IMR-90 (cell line): ENCODE measurements at regions of chr16 and their contacts with region 1.

Region 1: GRCh38 chr16:13919683-13920509 is at the start of gene ERCC4:
- DNase-seq: peak; percentile 98
- ATAC-seq: peak; percentile 98
- H3K4me3 ChIP-seq: peak within 1 kb of the TSS; percentile 80
- H3K27ac ChIP-seq: peak within 1 kb of the TSS; percentile 86
- H3K4me1 ChIP-seq: peaks cover 7% of the 10 kb centered on the region
- H3K27me3 ChIP-seq: peaks cover 6% of the 10 kb centered on the region
- CTCF ChIP-seq: peak; percentile 93
- POLR2A ChIP-seq: peak; percentile 68; the same call in 1 of the 2 replicates
- RAD21 ChIP-seq: peak; percentile 43
- total RNA-seq, gene ERCC4: 10.0 and 19.2 TPM in 2 replicates

Region 2: DNA sequence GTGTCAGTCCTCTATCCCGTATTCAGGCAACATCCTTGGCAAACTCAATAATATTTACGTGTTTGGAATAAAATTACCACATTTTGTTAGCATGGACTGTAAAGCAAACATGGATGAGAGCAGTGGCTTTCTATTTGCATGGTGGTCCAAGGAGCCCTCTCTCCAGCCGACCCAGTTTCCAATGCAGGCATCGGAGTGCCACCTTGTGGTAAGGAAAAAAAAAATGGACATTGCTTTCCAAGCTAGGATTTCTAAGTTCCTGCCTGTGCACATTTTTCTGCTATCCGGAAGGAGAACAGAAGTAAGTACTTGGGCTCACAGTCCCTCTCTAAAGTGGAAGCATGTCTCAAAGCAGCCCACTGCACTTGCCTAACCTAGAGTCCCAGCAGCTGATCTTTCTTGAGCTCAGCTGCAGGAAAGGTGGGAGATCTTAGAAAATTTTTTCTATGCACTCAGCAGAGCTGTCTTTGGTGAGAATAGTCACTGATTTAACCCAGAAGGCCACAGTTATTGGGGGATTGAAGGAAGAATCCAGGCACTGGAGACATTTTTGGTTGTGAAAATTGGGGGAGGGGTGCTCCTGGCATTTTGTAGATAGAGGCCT is 46.0 kb before region 1 on chr16:
- CTCF ChIA-PET with region 1: interaction called, 12 read pairs
- POLR2A ChIA-PET with region 1: no interaction called
- dilution Hi-C with region 1: no loop called
- in situ Hi-C with region 1: no loop called
- intact Hi-C with region 1: no loop called
- DNase-seq: peak; percentile 2
- ATAC-seq: peak; percentile 37; the same call in 1 of the 2 replicates
- H3K4me3 ChIP-seq: no peak overlapping the region
- H3K27ac ChIP-seq: no peak overlapping the region
- H3K4me1 ChIP-seq: no peaks in the 10 kb centered on the region
- H3K27me3 ChIP-seq: no peaks in the 10 kb centered on the region
- CTCF ChIP-seq: peak; percentile 37
- POLR2A ChIP-seq: no peak
- RAD21 ChIP-seq: peak; percentile 33

Region 3: DNA sequence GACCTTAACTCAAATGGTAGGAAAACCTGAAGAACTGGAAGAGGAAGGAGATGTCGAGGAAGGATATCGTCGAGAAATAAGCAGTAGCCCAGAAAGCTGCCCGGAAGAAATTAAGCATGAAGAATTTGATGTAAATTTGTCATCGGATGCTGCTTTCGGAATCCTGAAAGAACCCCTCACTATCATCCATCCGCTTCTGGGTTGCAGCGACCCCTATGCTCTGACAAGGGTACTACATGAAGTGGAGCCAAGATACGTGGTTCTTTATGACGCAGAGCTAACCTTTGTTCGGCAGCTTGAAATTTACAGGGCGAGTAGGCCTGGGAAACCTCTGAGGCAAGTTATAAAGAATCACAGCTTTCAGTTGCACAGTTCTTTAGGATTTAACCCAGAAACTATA is 15.5 kb after region 1 on chr16:
- CTCF ChIA-PET with region 1: interaction called, 11 read pairs
- POLR2A ChIA-PET with region 1: interaction called, 5 read pairs
- dilution Hi-C with region 1: no loop called
- in situ Hi-C with region 1: no loop called
- intact Hi-C with region 1: no loop called
- DNase-seq: no peak
- ATAC-seq: no peak
- H3K4me3 ChIP-seq: no peak overlapping the region
- H3K27ac ChIP-seq: no peak overlapping the region
- H3K4me1 ChIP-seq: peaks cover 2% of the 10 kb centered on the region
- H3K27me3 ChIP-seq: no peaks in the 10 kb centered on the region
- CTCF ChIP-seq: peak; percentile 16; the same call in 1 of the 2 replicates
- POLR2A ChIP-seq: no peak
- RAD21 ChIP-seq: no peak

Region 4: DNA sequence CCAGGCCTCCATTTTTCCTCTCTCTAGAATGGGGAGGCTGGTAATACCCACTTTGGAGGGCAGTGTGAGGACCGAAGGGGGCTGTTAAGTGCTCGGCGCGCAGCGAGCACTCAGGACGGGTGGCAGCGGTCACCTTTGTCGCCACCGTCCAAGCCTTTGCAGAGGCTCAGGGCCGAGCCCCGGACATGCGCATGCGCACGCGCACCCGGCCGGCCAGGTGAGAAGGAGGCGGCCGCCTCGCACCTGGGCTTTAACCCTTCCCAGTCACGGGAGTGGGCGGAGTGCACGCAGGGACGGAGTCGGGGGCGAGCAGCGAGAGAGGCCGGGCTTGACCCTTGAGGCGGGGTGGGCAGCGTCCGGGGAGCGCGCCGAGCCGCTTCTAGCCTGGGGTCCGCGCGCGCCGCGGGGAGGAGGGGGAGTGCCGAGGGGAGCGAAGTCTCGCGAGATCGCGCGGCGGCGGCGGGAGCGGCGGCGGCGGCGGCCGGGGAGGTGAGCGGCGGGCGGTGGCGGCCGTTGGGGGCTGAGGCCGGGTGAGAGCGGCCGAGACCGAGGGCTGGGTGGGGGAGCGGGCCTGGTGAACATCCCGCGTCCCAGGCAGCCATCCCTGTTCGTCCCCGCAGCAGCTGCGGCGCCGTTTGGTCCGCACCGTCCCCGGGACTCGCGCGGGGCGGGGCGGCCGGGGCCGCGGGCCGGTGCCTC is 151.1 kb after region 1 on chr16 and contains the start of gene MRTFB:
- CTCF ChIA-PET with region 1: no interaction called
- POLR2A ChIA-PET with region 1: no interaction called
- dilution Hi-C with region 1: no loop called
- in situ Hi-C with region 1: no loop called
- intact Hi-C with region 1: loop called (anchors 5 kb)
- DNase-seq: peak; percentile 27
- ATAC-seq: peak; percentile 97
- H3K4me3 ChIP-seq: peak within 1 kb of the TSS; percentile 84
- H3K27ac ChIP-seq: peak within 1 kb of the TSS; percentile 68
- H3K4me1 ChIP-seq: no peaks in the 10 kb centered on the region
- H3K27me3 ChIP-seq: no peaks in the 10 kb centered on the region; the same call in 1 of the 2 replicates
- CTCF ChIP-seq: no peak
- POLR2A ChIP-seq: no peak
- RAD21 ChIP-seq: no peak; the same call in 1 of the 2 replicates
- total RNA-seq, gene MRTFB: 5.4 and 6.9 TPM in 2 replicates

Region 5: GRCh38 chr16:14202697-14203096 is 282.8 kb after region 1 on chr16:
- CTCF ChIA-PET with region 1: interaction called, 3 read pairs
- POLR2A ChIA-PET with region 1: interaction called, 11 read pairs
- dilution Hi-C with region 1: no loop called
- in situ Hi-C with region 1: no loop called
- intact Hi-C with region 1: no loop called
- DNase-seq: no peak
- ATAC-seq: no peak; the same call in 1 of the 2 replicates
- H3K4me3 ChIP-seq: no peak overlapping the region
- H3K27ac ChIP-seq: no peak overlapping the region
- H3K4me1 ChIP-seq: no peaks in the 10 kb centered on the region; the same call in 1 of the 2 replicates
- H3K27me3 ChIP-seq: no peaks in the 10 kb centered on the region
- CTCF ChIP-seq: no peak
- POLR2A ChIP-seq: no peak
- RAD21 ChIP-seq: no peak

Region 6: DNA sequence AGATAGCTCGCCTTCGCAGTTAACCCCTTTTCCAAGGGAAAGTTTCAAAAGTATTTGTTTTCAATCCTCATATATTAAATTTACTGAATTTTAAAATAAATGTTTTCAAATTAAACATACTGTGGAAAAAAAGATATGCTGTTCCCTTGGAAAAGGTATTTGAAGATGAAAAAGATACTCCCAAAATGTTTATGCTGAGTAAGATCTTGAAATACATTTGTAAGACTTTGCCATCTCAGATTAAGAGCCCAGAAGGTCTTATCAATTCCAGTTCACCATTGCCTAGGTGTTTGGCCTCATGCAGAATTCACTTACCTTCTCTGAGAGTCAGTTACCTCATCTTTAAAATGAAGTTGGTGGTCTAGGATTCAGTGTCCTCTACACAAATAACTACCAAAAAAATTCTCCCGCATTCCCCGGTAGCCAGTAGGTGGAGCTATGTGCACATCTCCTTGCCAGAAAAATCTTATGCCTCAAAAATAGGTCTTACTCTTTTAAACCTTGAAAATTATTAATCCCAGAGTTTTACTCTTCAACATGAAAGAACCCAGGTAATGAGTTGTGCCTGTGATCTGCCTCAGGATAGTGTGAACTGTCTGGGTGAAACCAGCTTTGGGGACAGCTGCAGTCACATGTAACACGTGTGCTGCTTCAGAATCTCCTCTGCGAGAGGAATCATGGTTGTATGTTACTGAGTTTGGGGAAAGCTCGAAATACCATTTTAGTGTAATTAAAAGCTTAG is 329.6 kb after region 1 on chr16:
- CTCF ChIA-PET with region 1: interaction called, 7 read pairs
- POLR2A ChIA-PET with region 1: no interaction called
- dilution Hi-C with region 1: no loop called
- in situ Hi-C with region 1: loop called (anchors 10 kb)
- intact Hi-C with region 1: no loop called
- DNase-seq: peak; percentile 43
- ATAC-seq: peak; percentile 70
- H3K4me3 ChIP-seq: no peak overlapping the region
- H3K27ac ChIP-seq: no peak overlapping the region
- H3K4me1 ChIP-seq: no peaks in the 10 kb centered on the region
- H3K27me3 ChIP-seq: no peaks in the 10 kb centered on the region
- CTCF ChIP-seq: peak; percentile 94
- POLR2A ChIP-seq: no peak
- RAD21 ChIP-seq: peak; percentile 89

Region 7: GRCh38 chr16:14529010-14529669 is 609.2 kb after region 1 on chr16:
- CTCF ChIA-PET with region 1: no interaction called
- POLR2A ChIA-PET with region 1: no interaction called
- dilution Hi-C with region 1: no loop called
- in situ Hi-C with region 1: loop called (anchors 5 kb)
- intact Hi-C with region 1: loop called (anchors 2 kb)
- DNase-seq: peak; percentile 93
- ATAC-seq: peak; percentile 90
- H3K4me3 ChIP-seq: peak overlapping the region; percentile 26; the same call in 1 of the 2 replicates
- H3K27ac ChIP-seq: peak overlapping the region; percentile 84
- H3K4me1 ChIP-seq: peaks cover 8% of the 10 kb centered on the region
- H3K27me3 ChIP-seq: no peaks in the 10 kb centered on the region
- CTCF ChIP-seq: peak; percentile 95
- POLR2A ChIP-seq: peak; percentile 51; the same call in 1 of the 2 replicates
- RAD21 ChIP-seq: peak; percentile 100